Right cardiac atrium (tissue), 5 donors: ENCODE measurements at regions of chr18 and their contacts with region 1.

Region 1: DNA sequence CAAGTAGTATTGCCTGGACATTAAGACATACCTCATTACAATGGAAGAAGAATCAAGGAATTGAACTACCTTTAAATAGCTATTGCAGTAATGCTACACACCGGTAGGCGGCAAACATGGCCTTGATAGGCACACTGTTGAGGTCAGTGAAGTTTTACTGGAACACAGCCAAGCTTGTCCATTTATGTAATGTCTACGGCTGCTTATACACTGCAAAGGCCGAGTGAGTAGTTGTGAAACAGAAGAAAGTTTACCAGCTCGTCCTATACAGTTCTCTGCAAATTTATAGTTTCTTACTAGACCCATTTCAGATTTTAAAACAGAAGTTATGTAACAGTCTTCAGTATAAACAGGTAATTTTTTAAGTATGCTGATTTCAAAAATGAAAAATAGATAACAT is 38.8 kb downstream of the PPP4R1 start:
- DNase-seq: peak; percentile 65 to 77 (median 67)
- ATAC-seq: peak; percentile 97
- H3K4me3 ChIP-seq: no peak overlapping the region
- H3K27ac ChIP-seq: no peak overlapping the region
- H3K4me1 ChIP-seq: no peaks in the 10 kb centered on the region
- H3K27me3 ChIP-seq: no peaks in the 10 kb centered on the region

Region 2: GRCh38 chr18:9661564-9661963 is 86.0 kb after region 1 on chr18:
- intact Hi-C with region 1: no loop called
- DNase-seq: no peak
- ATAC-seq: no peak
- H3K4me3 ChIP-seq: no peak overlapping the region
- H3K27ac ChIP-seq: no peak overlapping the region
- H3K4me1 ChIP-seq: no peaks in the 10 kb centered on the region
- H3K27me3 ChIP-seq: no peaks in the 10 kb centered on the region

Region 3: GRCh38 chr18:9771261-9771976 is 195.9 kb after region 1 on chr18:
- intact Hi-C with region 1: loop called in 2 of 4 experiments (anchors 10 kb)
- DNase-seq: peak; percentile 89 to 94 (median 94)
- ATAC-seq: peak; percentile 96
- H3K4me3 ChIP-seq: no peak overlapping the region
- H3K27ac ChIP-seq: no peak overlapping the region
- H3K4me1 ChIP-seq: no peaks in the 10 kb centered on the region
- H3K27me3 ChIP-seq: no peaks in the 10 kb centered on the region

Region 4: DNA sequence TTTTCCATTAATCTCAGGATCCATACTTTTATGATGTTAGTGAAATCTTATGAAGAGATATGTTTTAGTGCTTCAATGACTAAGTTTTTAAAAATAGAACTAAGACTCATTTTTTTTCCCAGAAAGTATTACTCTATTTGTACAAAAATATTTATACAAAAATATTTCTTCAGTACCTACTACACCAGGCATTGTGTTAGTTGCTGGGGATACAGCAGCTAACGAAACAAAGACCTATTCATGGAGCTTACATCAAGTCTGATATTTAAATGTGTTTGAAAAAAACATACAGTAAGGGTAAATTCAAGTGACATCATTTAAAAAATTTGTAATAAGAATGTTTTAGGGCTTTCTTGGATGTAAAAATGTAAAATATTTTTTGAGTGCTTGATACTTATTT is 349.8 kb after region 1 on chr18:
- intact Hi-C with region 1: loop called in 1 of 4 experiments (anchors 10 kb)
- DNase-seq: no peak
- ATAC-seq: peak in 1 of 2 donors; percentile 47
- H3K4me3 ChIP-seq: no peak overlapping the region
- H3K27ac ChIP-seq: no peak overlapping the region
- H3K4me1 ChIP-seq: peaks cover 7% of the 10 kb centered on the region
- H3K27me3 ChIP-seq: no peaks in the 10 kb centered on the region